ENCODE measurements at regions of chr15 and their contacts with region 1.

Region 1: GRCh38 chr15:40044717-40045571 is 6.0 kb upstream of the SRP14 start:
- DNase-seq: peak; percentile 83
- H3K4me3 ChIP-seq: no peak overlapping the region
- H3K27ac ChIP-seq: no peak overlapping the region
- H3K4me1 ChIP-seq: peaks cover 28% of the 10 kb centered on the region
- H3K27me3 ChIP-seq: no peaks in the 10 kb centered on the region
- CTCF ChIP-seq: peak; percentile 97
- POLR2A ChIP-seq: no peak

Region 2: GRCh38 chr15:39987821-39988220 is 57.1 kb before region 1 on chr15:
- CTCF ChIA-PET with region 1: no interaction called
- POLR2A ChIA-PET with region 1: no interaction called
- dilution Hi-C with region 1: no loop called
- intact Hi-C with region 1: no loop called
- DNase-seq: no peak
- H3K4me3 ChIP-seq: no peak overlapping the region
- H3K27ac ChIP-seq: no peak overlapping the region
- H3K4me1 ChIP-seq: no peaks in the 10 kb centered on the region
- H3K27me3 ChIP-seq: no peaks in the 10 kb centered on the region
- CTCF ChIP-seq: no peak
- POLR2A ChIP-seq: no peak

Region 3: DNA sequence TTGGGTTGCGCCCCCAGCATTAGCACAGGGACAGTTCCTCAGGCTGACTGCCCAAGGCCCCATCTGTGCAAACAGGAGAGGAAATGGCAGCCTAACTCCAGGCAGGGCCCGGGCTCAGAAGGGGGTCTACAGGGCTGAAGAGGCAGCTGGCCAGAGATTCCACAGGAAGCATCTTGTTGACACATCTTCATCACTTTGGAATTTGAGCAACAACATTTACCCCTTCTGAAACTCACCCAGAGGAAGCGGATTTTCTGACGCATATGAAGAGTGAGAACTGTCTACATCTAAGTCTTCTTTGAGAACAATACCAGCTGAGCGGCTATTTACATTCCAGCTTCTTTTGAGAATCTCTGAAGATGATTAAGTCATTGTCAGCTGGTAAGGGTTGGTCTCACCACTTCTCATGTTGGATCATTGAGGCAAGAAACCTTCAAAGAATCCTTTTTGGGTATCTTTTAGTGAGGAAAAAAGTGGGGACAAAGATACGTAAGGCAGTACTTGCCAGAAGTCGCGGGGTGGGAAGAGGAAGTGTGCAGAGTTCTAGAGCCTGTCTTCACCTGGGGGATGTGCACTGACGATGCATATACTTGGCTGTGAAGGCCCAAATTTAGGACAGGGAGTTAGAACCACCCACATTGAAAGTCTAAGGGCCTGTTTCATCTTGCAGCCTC is 19.4 kb after region 1 on chr15:
- CTCF ChIA-PET with region 1: interaction called, 3 read pairs
- POLR2A ChIA-PET with region 1: no interaction called
- dilution Hi-C with region 1: no loop called
- intact Hi-C with region 1: loop called (anchors 1 kb)
- DNase-seq: peak; percentile 51
- H3K4me3 ChIP-seq: no peak overlapping the region
- H3K27ac ChIP-seq: peak overlapping the region; percentile 77
- H3K4me1 ChIP-seq: peaks cover 22% of the 10 kb centered on the region
- H3K27me3 ChIP-seq: no peaks in the 10 kb centered on the region
- CTCF ChIP-seq: no peak
- POLR2A ChIP-seq: no peak

Region 4: GRCh38 chr15:40098489-40099261 is 53.7 kb after region 1 on chr15:
- CTCF ChIA-PET with region 1: interaction called, 144 read pairs
- POLR2A ChIA-PET with region 1: interaction called, 8 read pairs
- dilution Hi-C with region 1: no loop called
- intact Hi-C with region 1: loop called (anchors 1 kb)
- DNase-seq: peak; percentile 97
- H3K4me3 ChIP-seq: no peak overlapping the region
- H3K27ac ChIP-seq: peak overlapping the region; percentile 91
- H3K4me1 ChIP-seq: peaks cover 46% of the 10 kb centered on the region
- H3K27me3 ChIP-seq: no peaks in the 10 kb centered on the region
- CTCF ChIP-seq: no peak
- POLR2A ChIP-seq: no peak

Region 5: DNA sequence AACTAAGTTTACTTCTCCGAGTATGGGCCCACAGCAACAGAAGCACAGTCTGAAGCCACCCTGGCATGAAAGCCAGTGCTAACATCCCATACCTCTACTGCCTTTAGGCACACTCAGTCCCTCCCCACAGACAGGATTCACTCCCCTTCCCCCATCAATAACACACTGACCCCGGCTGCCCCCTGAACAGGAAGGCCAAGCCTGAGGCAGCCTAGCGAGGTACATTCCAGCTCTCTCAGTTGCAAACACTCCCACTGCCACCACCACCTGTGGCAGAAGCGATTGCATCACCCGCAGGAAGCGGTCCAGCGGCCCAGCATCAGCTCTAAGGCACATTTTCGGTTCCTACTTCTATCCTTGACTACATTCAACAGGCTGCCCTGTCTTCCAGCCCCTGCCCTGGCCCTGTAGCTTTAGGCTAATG is 70.7 kb after region 1 on chr15:
- CTCF ChIA-PET with region 1: interaction called, 12 read pairs
- POLR2A ChIA-PET with region 1: interaction called, 3 read pairs
- dilution Hi-C with region 1: no loop called
- intact Hi-C with region 1: no loop called
- DNase-seq: no peak
- H3K4me3 ChIP-seq: no peak overlapping the region
- H3K27ac ChIP-seq: no peak overlapping the region
- H3K4me1 ChIP-seq: no peaks in the 10 kb centered on the region
- H3K27me3 ChIP-seq: peaks cover 11 to 23% of the 10 kb centered on the region in 2 experiments
- CTCF ChIP-seq: no peak
- POLR2A ChIP-seq: no peak

Region 6: DNA sequence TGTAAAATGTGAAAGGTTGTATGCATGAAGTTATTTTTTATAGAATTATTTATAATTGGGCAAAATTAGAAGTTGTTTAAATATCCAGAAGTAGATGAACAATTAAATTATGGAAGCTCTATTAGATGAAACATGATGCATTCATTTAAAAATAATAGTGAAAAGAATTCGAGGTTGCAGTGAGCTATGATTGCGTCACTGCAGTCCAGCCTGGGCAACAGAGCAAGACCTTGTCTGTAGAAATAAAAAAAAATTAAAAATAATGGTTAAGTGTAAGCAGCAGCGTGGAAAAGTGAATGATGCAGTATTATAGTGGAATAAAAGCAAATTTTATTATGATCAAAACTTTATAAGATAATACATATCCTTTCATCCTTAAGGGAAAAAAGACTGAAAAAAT is 130.2 kb after region 1 on chr15:
- CTCF ChIA-PET with region 1: no interaction called
- POLR2A ChIA-PET with region 1: no interaction called
- dilution Hi-C with region 1: no loop called
- intact Hi-C with region 1: loop called (anchors 5 kb)
- DNase-seq: no peak
- H3K4me3 ChIP-seq: no peak overlapping the region
- H3K27ac ChIP-seq: no peak overlapping the region
- H3K4me1 ChIP-seq: no peaks in the 10 kb centered on the region
- H3K27me3 ChIP-seq: no peaks in the 10 kb centered on the region
- CTCF ChIP-seq: no peak
- POLR2A ChIP-seq: no peak

Measured in endothelial cell of umbilical vein (primary cell).